Calu3 (cell line): ENCODE measurements at regions of chr17 and their contacts with region 1.

Region 1: GRCh38 chr17:76005263-76006149 is 4.9 kb downstream of the CDK3 start:
- DNase-seq: peak; percentile 91
- H3K4me3 Mint-ChIP-seq: peak overlapping the region; percentile 14
- H3K27ac Mint-ChIP-seq: peak overlapping the region; percentile 53
- H3K4me1 Mint-ChIP-seq: peaks cover 12% of the 10 kb centered on the region
- H3K27me3 Mint-ChIP-seq: no peaks in the 10 kb centered on the region
- CTCF ChIP-seq: peak; percentile 71

Region 2: DNA sequence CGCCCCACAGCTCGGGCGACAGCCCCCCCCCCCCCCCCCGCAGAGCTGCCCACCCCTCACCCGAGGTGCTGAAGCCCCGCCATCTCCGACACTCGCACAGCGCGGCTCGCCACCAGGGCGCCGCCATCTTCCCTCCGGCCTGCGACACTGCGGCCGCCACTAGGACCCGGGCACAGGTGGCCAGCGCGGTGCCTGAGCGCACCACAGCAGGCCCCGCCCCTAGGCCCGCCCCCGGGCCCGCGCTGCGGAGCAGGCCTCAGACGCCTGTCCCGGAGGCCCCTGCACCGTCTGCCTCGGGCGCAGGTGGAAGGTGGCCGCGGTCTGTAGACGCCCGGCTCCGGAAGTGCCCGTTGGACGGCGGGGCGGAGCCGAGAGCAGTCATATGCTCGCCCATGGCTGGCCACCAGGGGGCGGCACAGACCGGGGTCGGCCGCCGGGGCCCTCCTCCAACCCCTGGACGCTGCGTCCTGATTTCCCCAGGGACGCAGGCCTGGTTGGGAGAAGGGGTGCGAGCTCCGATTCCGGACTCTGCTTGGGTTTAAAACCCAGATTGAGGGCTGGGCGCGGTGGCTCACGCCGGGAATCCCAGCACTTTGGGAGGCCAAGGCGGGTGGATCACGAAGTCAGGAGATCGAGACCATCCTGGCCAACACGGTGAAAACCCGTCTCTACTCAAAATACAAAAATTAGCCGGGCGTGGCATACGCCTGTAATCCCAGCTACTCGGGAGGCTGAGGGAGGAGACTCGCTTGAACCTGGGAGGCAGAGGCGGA is 100.6 kb before region 1 on chr17 and contains the start of gene MRPL38:
- CTCF ChIA-PET with region 1: interaction called, 22 read pairs
- intact Hi-C with region 1: loop called (anchors 1 kb)
- DNase-seq: peak; percentile 99
- H3K4me3 Mint-ChIP-seq: peak within 1 kb of the TSS; percentile 97
- H3K27ac Mint-ChIP-seq: peak within 1 kb of the TSS; percentile 71
- H3K4me1 Mint-ChIP-seq: no peaks in the 10 kb centered on the region
- H3K27me3 Mint-ChIP-seq: no peaks in the 10 kb centered on the region
- CTCF ChIP-seq: peak; percentile 88
- total RNA-seq, gene MRPL38: 112 and 130 TPM in 2 replicates

Region 3: GRCh38 chr17:76056835-76057234 is 51.3 kb after region 1 on chr17:
- CTCF ChIA-PET with region 1: no interaction called
- intact Hi-C with region 1: no loop called
- DNase-seq: no peak
- H3K4me3 Mint-ChIP-seq: no peak overlapping the region
- H3K27ac Mint-ChIP-seq: no peak overlapping the region
- H3K4me1 Mint-ChIP-seq: peaks cover 41% of the 10 kb centered on the region
- H3K27me3 Mint-ChIP-seq: no peaks in the 10 kb centered on the region
- CTCF ChIP-seq: no peak